Activated CD4-positive, alpha-beta T cell treated with anti-CD3 and anti-CD28 coated beads, Interleukin-2, amount 10 ng/mL, durations not matched to agents 24 days and 14 days (primary cell): ENCODE measurements at regions of chr1 and their contacts with region 1.

Region 1: DNA sequence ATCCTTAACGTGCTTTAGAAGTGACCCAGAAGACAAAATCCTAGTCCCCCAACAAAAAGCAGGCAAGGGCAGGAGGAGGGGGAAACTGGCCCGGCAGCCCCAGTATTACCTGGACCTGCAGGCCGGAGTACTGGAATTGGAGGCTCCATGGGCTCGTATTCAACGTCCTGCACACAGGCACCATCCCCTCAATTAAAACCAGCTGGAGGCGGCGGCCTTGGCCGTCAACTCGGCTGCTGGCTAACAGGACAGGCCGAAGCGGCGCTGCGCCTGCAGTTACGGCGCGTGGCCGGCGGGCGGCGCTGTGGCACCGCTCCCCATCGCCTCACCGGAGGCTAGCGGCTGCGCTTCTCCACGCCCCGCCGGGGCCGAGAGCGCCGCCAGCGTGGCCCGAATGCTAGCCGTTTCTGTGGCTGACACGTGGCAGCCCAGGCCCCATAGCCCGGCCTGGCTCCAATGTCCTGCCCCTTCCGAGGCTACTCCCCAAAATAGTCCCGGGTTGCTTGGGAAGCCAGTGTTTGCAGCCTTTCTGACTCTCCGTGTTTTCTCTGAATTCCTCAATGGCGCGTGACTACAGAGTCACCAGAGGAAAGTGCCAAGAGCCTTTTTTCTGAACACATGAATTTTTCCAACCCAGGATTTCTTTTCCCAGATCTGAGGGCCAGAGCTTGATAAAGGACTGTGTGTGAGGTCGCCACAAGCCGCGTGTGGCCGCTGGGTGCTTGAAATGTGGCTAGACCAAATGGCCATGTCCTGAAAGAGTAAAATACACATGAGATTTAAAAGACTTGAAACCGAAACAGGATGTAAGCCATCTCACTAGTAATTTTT is 82.5 kb downstream of the HHIPL2 start:
- DNase-seq: peak; percentile 95
- H3K4me3 Mint-ChIP-seq: peak overlapping the region; percentile 81
- H3K27ac Mint-ChIP-seq: peak overlapping the region; percentile 89
- H3K4me1 Mint-ChIP-seq: peaks cover 11% of the 10 kb centered on the region
- H3K27me3 Mint-ChIP-seq: peaks cover 22% of the 10 kb centered on the region

Region 2: DNA sequence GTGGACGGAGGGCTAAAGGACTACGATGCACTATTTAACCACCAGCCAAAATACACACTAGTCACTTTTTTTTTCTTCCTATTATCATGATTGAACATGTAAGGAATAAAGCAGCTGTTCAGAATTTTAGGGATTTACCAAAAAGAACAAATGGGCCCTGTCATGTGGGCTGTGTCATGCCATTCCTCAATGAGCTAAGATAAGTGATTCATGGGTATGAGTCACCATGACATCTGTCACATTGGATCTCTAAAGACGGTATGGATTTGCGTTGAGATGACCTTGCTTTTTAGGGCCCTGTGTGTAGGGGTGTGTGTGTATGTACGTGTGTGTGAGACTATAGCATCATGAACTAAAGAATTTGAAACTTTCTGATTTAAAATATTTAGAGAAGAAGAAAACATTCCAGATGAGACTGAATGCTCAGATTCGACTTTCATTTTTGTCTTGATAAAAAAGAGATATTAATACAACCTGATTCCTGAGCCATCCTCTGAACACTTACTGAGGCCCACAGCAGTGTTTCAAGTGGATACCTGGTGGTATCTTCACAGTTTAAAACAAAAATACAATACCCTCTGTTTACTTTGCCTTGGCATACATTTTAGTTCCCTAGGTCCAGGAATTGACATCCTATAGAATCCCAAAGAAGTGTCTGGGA is 477.4 kb before region 1 on chr1:
- intact Hi-C with region 1: no loop called
- DNase-seq: no peak
- H3K4me3 Mint-ChIP-seq: no peak overlapping the region
- H3K27ac Mint-ChIP-seq: no peak overlapping the region
- H3K4me1 Mint-ChIP-seq: peaks cover 8% of the 10 kb centered on the region
- H3K27me3 Mint-ChIP-seq: peaks cover 7% of the 10 kb centered on the region

Region 3: GRCh38 chr1:222240536-222241181 is 224.8 kb before region 1 on chr1:
- intact Hi-C with region 1: no loop called
- DNase-seq: no peak
- H3K4me3 Mint-ChIP-seq: no peak overlapping the region
- H3K27ac Mint-ChIP-seq: no peak overlapping the region
- H3K4me1 Mint-ChIP-seq: no peaks in the 10 kb centered on the region
- H3K27me3 Mint-ChIP-seq: no peaks in the 10 kb centered on the region

Region 4: DNA sequence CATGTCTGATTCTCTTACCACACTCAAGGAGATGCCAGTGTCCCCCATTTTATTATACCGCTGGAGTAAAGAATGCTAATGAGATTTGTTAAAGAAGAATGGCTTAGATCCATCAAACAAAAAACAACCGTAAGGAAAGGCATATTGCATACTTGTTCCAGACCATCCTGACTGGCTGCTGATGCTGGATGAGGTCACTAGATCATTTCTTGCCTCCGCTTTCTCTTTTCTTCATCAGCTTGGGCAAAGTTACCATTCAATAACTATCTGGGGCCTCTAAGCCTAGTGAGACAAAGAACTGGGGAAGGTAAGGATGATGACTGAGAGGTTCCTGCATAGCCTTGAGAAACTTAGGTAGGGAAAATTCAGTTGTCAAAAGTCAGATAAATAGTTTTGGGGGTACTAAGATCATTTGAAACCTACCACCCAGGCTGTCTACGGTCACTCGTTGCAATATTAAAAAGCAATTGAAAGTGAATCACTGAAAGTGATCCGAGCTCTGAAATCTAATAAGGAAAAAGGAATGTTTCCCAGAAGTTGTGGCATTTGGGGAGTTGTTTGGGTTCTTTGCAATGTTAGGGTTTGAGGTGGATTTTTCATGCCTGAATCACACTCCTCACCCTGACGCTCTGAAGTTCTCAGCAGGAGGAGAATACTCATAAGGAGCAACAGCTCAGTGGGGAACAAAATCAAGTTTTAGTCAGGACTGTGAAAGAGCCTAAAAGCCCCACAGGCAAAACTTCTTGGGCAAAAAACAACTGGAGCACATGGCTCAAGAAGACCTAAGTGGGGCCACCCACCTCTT is 94.3 kb before region 1 on chr1:
- intact Hi-C with region 1: no loop called
- DNase-seq: no peak
- H3K4me3 Mint-ChIP-seq: no peak overlapping the region
- H3K27ac Mint-ChIP-seq: no peak overlapping the region
- H3K4me1 Mint-ChIP-seq: no peaks in the 10 kb centered on the region
- H3K27me3 Mint-ChIP-seq: no peaks in the 10 kb centered on the region

Region 5: GRCh38 chr1:222521299-222522104 is 56.1 kb after region 1 on chr1:
- intact Hi-C with region 1: no loop called
- DNase-seq: no peak
- H3K4me3 Mint-ChIP-seq: no peak overlapping the region
- H3K27ac Mint-ChIP-seq: no peak overlapping the region
- H3K4me1 Mint-ChIP-seq: no peaks in the 10 kb centered on the region
- H3K27me3 Mint-ChIP-seq: peaks cover 5% of the 10 kb centered on the region

Region 6: DNA sequence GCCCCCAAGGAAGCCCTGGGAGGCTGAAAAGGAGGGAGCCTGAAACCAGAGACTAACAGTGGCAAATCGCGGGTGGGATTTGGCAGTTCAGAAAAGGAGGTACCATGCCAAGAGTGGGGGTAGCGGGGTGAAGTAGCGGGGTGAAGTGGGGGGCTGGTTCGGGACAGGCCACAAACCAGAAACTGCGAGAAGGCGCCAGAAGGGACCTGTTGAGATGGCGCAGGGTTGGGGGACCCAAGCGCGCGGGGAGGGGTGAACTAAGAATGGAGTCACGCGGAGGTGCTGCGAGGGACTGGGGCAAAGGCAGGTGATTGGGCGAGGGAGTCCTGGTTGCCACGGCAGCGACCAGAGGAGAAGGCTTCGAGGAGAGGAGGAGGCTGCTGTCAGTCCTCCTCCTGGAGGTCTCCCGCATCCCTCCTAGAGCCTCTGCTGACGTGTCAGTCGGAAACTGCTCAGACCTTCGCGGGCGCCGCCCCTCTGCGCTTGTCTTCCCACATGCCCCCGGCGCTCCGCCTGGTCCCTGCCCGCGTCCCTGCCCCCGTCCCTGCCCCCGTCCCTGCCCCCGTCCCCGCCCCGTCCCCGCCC is 152.0 kb after region 1 on chr1:
- intact Hi-C with region 1: loop called (anchors 5 kb)
- DNase-seq: peak; percentile 96
- H3K4me3 Mint-ChIP-seq: peak overlapping the region; percentile 87
- H3K27ac Mint-ChIP-seq: peak overlapping the region; percentile 87
- H3K4me1 Mint-ChIP-seq: peaks cover 32% of the 10 kb centered on the region
- H3K27me3 Mint-ChIP-seq: peaks cover 33% of the 10 kb centered on the region

Region 7: GRCh38 chr1:222634180-222635013 is 169.0 kb after region 1 on chr1:
- intact Hi-C with region 1: loop called (anchors 1 kb)
- DNase-seq: peak; percentile 93
- H3K4me3 Mint-ChIP-seq: no peak overlapping the region
- H3K27ac Mint-ChIP-seq: no peak overlapping the region
- H3K4me1 Mint-ChIP-seq: peaks cover 6% of the 10 kb centered on the region
- H3K27me3 Mint-ChIP-seq: no peaks in the 10 kb centered on the region

Region 8: DNA sequence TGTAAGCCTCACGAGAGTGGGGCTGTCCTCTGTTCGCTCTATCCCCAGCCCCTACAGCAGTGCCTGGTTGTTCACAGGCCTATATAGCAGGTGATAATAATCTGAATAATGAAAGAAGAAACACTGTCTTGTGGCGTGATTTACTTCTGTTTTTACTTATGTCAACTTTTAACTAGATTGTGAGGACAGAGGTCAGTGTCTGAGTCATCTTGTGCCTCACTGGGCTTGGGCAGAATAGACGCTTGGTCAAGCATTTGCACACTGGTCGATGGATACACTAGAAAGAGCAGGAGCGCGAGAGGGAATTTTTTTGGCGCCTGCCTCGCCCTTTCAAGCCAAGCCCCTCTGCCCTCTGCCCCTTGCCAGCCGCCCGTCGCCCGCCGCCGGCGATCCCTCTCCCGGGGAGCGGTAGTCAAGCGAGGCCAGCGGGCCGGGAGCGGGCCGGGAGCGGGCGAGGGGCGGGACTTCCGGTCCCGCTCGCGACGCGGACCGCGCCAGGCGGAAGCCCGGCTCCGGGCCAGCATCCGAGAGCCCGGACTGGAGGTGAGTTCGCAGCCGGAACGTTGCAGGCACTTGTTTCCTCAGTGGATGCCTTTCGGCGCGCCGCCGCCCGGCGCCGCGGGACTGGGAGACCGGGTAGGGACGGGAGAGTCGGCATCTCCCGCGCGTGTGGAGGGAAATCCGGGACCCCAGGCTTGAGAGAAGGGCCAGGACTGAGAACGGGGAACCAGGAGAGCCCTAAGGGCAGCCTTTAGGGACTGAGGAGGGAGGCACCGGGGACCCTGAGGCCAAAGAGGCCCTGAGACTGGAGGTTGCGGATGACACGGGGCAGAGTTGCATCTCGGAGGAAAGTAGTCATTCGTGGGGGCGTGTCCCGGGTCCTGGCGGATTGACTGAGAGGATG is 349.4 kb after region 1 on chr1 and contains the start of gene DISP1:
- intact Hi-C with region 1: loop called (anchors 2 kb)
- DNase-seq: peak; percentile 91
- H3K4me3 Mint-ChIP-seq: peak within 1 kb of the TSS; percentile 95
- H3K27ac Mint-ChIP-seq: peak within 1 kb of the TSS; percentile 95
- H3K4me1 Mint-ChIP-seq: peaks cover 17% of the 10 kb centered on the region
- H3K27me3 Mint-ChIP-seq: peaks cover 9% of the 10 kb centered on the region
- total RNA-seq, gene DISP1: 1.3 and 2.0 TPM in 2 replicates

Region 9: GRCh38 chr1:223081181-223081994 is 616.0 kb after region 1 on chr1:
- intact Hi-C with region 1: loop called (anchors 1 kb)
- DNase-seq: peak; percentile 89
- H3K4me3 Mint-ChIP-seq: peak overlapping the region; percentile 66
- H3K27ac Mint-ChIP-seq: no peak overlapping the region
- H3K4me1 Mint-ChIP-seq: no peaks in the 10 kb centered on the region
- H3K27me3 Mint-ChIP-seq: no peaks in the 10 kb centered on the region

Region 10: GRCh38 chr1:223123011-223123610 is 657.7 kb after region 1 on chr1:
- intact Hi-C with region 1: loop called (anchors 1 kb)
- DNase-seq: no peak
- H3K4me3 Mint-ChIP-seq: peak overlapping the region; percentile 65
- H3K27ac Mint-ChIP-seq: no peak overlapping the region
- H3K4me1 Mint-ChIP-seq: peaks cover 6% of the 10 kb centered on the region
- H3K27me3 Mint-ChIP-seq: peaks cover 8% of the 10 kb centered on the region